KBM-7 (cell line): ENCODE measurements at regions of chr20 and their contacts with region 1.

Region 1: DNA sequence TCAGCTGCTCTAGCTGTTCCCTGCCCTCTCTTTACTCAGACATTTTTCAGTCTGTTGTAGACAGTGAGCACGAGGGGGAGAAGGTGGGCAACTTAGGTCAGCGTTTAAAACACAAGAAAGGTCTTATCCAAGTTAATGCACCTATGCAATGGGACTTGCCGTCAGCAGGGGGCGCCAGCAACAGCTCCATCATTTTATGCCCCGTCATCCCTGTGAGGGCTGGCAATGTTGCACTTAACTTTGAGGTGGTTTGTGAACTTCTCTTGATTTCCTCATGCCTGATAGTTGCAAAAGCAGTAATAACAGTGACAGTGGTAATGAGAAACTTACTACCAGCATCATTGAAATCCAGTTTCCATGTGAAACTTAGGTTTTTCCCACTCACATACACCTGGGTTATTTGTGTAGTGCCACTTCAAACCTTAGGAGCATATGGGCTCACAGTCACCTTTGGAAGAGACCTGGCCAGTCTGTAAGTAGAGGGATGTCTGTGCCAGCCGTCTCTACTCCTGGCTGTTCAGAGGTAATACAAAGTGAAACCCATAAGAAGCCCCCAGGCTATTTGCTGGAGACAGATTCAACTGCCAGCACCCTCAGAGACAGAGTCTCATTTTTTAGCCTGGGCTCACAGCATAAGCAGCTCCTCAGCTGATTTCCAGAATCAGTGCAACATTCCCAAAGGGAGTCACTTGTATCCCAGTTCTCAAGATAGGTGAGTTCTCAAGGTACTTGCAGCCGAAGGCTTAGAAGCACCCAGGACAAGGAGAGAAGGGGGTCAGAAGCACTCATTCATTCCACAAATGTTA is 44.8 kb upstream of the ID1 start:
- DNase-seq: peak; percentile 73

Region 2: DNA sequence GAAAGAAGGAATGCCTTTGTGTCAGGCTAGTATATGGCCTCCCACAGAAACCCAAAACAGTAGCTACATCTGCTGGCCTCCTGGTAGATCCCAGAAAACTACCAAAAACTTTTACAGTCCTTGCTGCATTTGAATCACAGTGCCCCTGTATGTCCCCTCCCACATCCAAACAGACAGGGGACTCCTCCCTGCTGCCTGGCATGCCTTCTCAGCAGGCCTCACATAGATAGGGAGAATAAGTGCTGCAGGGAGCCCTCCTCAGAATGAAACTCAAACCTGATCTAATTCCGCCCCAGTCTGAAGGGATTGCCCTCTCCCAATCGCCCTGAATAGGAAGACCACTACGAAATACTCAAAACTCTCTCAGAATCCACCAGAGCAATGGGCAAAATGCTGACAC is 237.8 kb before region 1 on chr20:
- in situ Hi-C with region 1: no loop called
- DNase-seq: no peak

Region 3: GRCh38 chr20:31617432-31618104 is 57.3 kb after region 1 on chr20:
- in situ Hi-C with region 1: loop called (anchors 10 kb)
- DNase-seq: peak; percentile 54

Region 4: DNA sequence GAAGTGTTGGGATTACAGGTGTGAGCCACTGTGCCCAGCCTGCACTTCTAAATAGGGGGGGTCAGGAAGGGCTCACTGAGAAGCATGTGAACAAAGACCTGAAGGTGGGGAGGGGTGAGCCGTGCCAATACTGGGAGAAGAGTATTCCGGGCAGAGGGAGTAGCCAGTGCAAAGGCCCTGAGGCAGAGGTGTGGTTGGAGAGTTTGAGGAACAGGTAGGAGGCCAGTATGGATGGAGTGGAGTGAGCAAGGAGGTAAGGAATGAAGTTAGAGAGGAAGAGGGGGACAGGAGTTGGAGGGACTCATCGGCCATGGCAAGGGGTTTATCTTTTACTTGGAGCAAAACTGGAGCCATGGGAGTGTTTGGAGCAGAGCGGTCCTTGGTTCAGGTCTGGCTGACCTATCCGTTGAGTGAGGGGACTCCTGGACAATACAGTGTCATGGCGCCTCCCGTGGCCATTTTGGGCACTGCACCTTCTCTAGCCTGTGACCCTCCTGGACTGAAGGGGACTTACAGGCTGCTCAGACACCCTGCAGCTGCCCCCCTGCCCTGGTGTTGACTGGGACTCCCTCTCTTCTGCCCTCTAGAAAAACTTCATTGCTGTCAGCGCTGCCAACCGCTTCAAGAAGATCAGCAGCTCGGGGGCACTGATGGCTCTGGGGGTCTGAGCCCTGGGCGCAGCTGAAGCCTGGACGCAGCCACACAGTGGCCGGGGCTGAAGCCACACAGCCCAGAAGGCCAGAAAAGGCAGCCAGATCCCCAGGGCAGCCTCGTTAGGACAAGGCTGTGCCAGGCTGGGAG is 273.0 kb after region 1 on chr20:
- in situ Hi-C with region 1: no loop called
- DNase-seq: peak; percentile 67

Region 5: DNA sequence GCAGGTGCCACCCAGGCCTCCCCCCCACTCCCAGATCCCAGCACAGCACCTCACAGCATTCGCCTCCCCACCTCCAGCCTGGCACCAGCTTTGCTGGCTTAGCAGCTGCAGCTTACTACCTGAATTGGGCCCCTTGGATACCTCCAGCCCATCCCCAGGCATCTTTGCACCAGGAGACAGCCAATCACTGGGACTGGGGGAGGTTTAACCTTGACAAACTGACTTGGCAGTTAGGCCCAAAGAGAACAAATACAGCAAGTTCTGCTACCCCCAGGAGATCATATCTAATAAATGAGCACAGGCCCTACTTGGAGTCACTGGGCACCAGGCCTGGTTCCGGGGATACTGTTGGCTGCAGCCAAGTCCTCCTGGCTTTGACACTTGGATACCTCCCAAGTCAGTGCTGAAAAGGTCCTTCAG is 382.8 kb after region 1 on chr20:
- in situ Hi-C with region 1: no loop called
- DNase-seq: no peak